Breast epithelium (tissue), 4 donors: ENCODE measurements at regions of chr11 and their contacts with region 1.

Region 1: DNA sequence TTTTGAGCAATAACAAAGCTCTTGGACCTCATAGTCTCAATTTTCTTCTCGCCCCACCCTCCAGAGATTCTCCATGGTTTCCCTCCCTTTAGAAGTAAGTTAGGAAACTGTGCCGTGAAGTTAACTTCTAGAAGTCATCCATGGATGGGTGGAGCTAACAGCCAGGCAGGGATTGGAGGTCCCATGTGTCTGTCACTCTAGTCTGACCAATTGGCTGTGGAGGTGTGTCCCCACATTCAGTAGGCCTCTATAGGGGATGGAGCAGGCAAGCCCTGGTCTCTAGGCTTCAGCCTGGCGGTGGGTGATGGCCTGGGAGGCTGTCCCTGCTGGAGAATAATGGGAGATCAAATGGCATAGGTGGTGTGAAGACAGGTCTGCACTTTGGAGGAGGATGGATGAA is 50.7 kb downstream of the TP53I11 start:
- DNase-seq: no peak
- H3K4me3 ChIP-seq: no peak overlapping the region
- H3K27ac ChIP-seq: no peak overlapping the region
- H3K4me1 ChIP-seq: no peaks in the 10 kb centered on the region
- H3K27me3 ChIP-seq: peaks cover 0 to 6% of the 10 kb centered on the region in 2 donors
- CTCF ChIP-seq: no peak
- POLR2A ChIP-seq: no peak

Region 2: DNA sequence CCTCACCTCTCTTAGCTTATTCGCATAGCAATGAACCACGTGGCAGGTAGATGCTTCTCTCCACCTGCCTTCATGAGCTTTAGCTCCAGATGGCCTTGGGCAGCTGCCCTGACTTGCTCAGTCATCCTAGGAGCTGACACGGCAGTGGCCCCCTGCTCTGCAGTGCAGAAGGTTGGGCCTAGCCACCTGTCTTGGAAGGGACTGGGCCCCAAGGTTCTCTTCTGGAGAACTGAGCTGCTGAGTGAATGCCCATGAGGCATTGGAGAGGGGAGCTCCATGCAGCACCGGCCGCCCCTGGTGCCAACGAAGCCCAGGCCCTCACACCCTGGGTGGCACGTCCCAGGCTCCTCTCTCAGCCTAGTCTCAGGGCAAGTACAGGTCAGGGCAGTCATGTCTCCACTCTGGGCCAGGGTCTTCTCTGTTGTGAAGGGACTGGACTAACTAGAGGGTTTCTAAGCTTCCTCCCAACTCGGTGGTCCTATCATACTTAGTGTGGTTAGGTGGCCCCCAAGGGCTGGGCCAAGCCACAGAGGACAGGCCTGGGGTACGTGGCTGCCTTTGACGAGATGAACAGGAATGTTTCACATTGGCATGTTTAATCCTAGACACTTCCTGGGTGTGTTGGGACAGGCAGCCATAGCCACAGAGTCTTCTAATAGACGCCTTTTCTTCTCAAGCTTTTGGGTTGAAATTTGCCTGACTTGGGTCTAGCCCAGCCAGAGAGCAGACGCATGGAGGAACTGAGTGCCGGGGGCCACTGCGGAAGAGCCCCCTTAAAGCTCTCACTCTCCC is 638.0 kb before region 1 on chr11:
- intact Hi-C with region 1: loop called (anchors 5 kb)
- DNase-seq: no peak
- H3K4me3 ChIP-seq: no peak overlapping the region
- H3K27ac ChIP-seq: peak overlapping the region in 1 of 2 donors; percentile 12
- H3K4me1 ChIP-seq: no peaks in the 10 kb centered on the region
- H3K27me3 ChIP-seq: no peaks in the 10 kb centered on the region
- CTCF ChIP-seq: no peak
- POLR2A ChIP-seq: no peak

Region 3: GRCh38 chr11:44886790-44887140 is 13.2 kb before region 1 on chr11:
- intact Hi-C with region 1: no loop called
- DNase-seq: no peak
- H3K4me3 ChIP-seq: no peak overlapping the region
- H3K27ac ChIP-seq: no peak overlapping the region
- H3K4me1 ChIP-seq: no peaks in the 10 kb centered on the region
- H3K27me3 ChIP-seq: no peaks in the 10 kb centered on the region
- CTCF ChIP-seq: no peak
- POLR2A ChIP-seq: no peak

Region 4: DNA sequence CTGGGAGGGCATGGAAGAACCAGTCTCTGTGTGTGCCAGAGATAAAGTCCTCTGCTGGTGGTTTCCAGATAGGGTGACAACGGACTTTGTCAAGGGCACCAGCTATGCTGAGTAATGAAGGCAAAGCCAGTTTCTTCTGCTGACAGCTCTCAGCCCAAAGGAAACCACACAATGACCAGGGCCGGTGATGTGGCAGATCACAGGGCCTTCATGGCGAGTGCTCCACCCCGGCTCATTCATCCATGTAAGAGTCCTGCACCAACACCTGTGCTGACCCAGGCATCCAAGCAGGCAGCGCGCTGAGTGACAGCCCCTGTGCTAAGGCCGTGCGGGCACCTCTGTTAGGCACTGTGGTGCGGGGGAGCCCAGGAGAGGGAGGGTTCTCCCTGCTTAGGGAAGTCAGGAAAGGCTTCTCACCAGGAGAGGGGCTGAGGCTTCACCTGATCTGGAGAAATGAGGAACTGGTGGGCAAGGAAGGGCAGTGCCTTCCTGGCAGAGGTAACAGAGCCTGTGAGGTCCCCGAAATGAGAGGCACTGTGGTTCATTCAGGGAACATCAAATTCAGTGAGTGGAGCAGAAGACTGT is 16.9 kb after region 1 on chr11:
- intact Hi-C with region 1: no loop called
- DNase-seq: no peak
- H3K4me3 ChIP-seq: no peak overlapping the region
- H3K27ac ChIP-seq: no peak overlapping the region
- H3K4me1 ChIP-seq: no peaks in the 10 kb centered on the region
- H3K27me3 ChIP-seq: no peaks in the 10 kb centered on the region
- CTCF ChIP-seq: no peak
- POLR2A ChIP-seq: no peak

Region 5: DNA sequence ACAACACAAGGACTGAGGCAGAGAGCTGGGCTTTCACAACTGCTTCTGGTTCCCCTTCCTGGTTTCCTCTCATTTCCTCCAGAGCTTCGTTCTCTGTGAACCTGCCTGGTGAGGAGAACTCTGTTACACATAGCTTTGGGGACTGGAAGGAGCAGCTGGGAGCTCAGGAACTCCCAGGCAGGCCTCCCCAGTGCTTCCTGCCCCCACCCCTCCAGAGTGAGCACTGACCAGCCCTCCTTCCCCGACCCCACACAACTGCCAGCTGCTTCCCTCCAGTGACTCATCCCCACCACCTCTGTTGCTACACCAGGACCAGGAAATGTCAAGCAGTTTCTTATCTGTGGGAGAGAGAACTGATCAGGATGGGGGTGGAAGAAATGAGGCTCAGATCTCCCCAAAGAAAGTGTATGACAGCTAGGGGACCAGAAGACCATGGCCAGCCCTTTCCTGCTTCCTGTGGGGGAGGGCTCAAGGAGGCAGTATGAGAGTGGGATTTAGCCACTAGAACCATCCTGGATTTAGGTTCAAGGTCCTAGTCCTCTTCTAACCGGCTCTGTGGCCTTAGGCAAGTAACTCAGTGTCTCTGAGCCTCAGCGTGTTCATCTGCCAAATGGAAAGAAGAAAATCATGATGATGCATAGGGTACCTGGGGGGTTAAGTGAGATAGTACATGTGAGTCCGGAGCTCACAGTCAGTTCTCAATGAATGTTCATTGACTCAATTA is 55.2 kb after region 1 on chr11:
- intact Hi-C with region 1: no loop called
- DNase-seq: no peak
- H3K4me3 ChIP-seq: no peak overlapping the region
- H3K27ac ChIP-seq: peak overlapping the region; percentile 45 to 60
- H3K4me1 ChIP-seq: no peaks in the 10 kb centered on the region
- H3K27me3 ChIP-seq: no peaks in the 10 kb centered on the region
- CTCF ChIP-seq: no peak
- POLR2A ChIP-seq: no peak

Region 6: DNA sequence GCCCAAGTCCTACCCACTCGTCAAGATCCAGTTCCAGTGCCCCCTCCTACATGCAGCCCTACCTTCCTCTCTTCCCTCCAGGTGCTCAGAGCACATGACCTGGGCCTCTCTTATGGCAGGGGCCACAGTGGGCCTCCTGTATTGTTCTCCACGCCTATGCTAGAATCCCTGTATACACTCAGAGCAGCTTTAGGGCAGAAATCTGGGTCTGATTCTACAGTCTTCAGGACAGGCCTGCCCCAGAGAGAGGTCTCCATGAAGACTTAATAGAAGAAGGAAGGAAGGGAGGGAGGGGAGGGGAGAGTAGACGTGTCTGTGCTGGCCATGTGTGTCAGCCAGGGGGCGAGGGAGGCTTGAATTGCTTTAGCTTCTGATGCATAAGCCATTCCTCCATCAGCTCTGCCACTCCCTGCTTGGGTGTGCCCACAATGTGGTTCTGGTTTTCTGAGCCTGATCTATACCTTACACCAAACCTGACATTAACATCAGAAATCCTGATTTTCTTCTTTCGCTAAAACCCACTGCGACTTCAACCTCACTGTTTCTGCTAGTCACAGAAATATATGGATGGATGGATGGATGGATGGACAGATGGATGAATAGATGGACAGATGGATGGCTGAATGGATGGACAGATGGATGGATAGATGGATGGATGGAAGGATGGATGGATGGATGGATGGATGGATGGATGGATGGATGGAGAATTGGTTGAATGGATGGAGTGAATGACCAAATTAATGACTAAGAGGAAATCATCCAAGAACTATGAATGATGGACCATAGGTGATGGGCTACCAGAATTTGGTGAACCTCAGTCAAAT is 189.9 kb after region 1 on chr11:
- intact Hi-C with region 1: no loop called
- DNase-seq: no peak
- H3K4me3 ChIP-seq: no peak overlapping the region
- H3K27ac ChIP-seq: peak overlapping the region; percentile 86 to 95
- H3K4me1 ChIP-seq: peaks cover 8 to 29% of the 10 kb centered on the region in 2 donors
- H3K27me3 ChIP-seq: no peaks in the 10 kb centered on the region
- CTCF ChIP-seq: no peak
- POLR2A ChIP-seq: no peak